ENCODE measurements at regions of chr6 and their contacts with region 1.

Region 1: DNA sequence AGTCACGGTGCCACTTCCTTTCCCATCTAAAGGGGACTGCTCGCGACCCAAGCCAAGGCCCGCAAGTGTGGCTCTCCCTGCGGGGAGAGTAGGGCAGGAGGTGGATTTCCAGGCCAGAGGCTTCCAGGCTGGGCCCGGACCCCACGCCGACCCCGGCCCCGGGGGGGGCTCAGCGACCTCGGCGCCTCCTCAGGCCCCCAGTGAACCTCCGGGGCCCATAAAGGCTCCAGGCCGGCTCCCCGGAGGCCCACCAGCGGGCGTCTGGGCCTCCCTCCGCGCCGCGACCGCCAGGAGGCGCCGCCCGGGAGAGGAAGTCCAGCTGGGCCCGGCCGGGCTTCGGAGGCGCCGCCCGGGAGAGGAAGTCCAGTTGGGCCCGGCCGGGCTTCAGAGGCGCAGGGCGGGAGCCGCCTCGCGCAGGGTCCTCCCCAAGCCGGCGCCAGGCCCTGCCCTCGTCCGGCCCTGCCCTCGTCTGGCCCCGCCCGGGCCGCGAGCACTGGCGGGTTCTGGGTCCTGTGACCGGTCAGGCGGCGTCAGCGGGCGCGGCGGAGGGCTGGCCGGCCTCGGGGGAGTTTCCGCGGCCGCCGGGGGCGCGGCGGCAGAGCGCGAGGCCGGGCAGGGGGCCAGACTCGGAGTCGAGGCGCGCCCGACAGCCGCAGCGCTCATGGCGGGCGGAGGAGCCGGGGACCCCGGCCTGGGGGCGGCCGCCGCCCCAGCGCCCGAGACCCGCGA is at the start of gene RAB32:
- DNase-seq: peak; percentile 95 to 97 (median 96)
- ATAC-seq: peak; percentile 97 to 100 (median 99)
- H3K4me3 ChIP-seq: peak within 1 kb of the TSS; percentile 63 to 88 (median 80)
- H3K27ac ChIP-seq: peak within 1 kb of the TSS; percentile 86 to 98 (median 94)
- H3K4me1 ChIP-seq: peaks cover 0 to 39% (median 19%) of the 10 kb centered on the region in 12 donors
- H3K27me3 ChIP-seq: no peaks in the 10 kb centered on the region
- CTCF ChIP-seq: peak; percentile 65 to 95 (median 80)
- POLR2A ChIP-seq: peak in 1 of 2 donors; percentile 74
- total RNA-seq, gene RAB32: 3.9 to 22.7 (median 7.7) TPM

Region 2: DNA sequence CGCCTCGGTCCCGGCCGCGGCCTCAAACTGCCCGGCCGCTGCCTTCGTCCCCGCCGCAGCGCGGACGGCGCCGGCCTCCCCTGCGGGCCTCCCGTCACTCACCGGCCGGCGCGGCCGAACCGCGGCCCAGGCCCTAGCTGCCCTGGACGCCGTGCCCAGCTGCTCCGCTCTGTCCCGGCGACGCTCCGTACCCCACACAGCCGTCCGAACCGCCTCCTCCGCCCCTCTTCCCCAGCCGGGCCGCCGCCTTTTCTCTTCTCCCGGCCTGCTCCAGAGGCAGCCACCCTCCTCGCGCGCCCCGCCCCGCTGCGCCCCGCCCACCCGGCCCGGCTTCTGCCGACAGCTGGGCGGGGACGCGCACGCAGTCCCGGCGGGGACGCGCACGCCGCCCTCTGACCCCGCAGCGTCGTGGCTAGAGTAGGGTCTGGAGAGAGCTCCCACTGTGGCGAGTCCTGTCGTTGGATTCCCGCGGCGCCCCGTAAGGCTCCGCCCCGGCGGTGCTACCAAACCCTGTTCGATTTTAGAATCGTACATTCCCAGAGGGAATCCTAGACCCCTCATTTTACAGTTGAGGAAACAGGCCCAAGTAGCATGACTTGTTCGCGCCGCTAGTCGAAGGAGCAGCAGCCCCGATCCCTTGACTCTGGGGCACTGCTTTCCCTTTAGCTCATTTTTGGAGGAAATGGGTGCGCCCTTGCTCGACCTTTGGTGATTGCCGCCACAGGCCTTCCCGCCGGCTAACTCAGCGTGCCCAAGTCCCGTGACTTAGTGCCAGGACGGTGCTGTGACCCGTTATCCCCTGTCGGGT is 728.7 kb before region 1 on chr6 and contains the start of gene FBXO30:
- intact Hi-C with region 1: loop called in 1 of 10 experiments (anchors 10 kb)
- DNase-seq: peak; percentile 88 to 94 (median 90)
- ATAC-seq: peak; percentile 91 to 98 (median 97)
- H3K4me3 ChIP-seq: peak within 1 kb of the TSS; percentile 50 to 82 (median 72)
- H3K27ac ChIP-seq: peak within 1 kb of the TSS; percentile 87 to 97 (median 94)
- H3K4me1 ChIP-seq: peaks cover 0 to 58% (median 40%) of the 10 kb centered on the region in 12 donors
- H3K27me3 ChIP-seq: no peaks in the 10 kb centered on the region
- CTCF ChIP-seq: peak in 3 of 12 donors; percentile 7 to 26 (median 9)
- POLR2A ChIP-seq: peak; percentile 26 to 91
- total RNA-seq, gene FBXO30: 9.0 to 17.1 (median 14.4) TPM

Region 3: DNA sequence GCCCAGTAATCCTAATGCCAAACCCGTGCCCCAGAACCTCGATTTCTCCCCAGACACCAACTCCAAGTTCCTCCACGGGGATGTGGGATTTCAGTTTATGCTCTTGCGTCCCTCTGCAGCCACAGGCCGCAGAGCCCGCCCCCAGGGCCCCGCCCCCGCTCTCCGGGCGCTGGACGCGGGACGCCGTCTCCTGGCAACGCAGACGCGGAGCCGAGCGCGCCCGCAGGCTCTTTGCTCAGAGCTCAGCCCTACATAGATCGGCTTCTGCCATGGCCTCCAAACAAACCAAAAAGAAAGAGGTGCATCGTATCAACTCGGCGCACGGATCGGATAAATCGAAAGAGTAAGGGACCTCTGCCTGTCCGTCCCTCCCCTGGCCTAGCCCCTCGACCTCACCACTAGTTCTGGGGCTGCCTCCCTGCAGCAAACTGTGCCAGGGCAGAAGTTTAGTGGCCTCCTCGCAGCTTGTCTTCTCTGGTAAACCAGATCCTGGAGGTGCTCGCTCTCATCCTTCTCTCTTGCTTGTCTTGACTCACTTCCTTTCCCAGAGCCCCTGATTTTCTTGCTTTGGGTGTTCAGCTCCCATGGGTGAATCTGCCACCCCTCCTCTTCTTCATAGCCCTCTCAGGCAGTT is 55.5 kb after region 1 on chr6 and contains the start of gene ADGB:
- intact Hi-C with region 1: loop called in 1 of 10 experiments (anchors 2 kb)
- DNase-seq: peak; percentile 57 to 89 (median 70)
- ATAC-seq: peak; percentile 51 to 96 (median 91)
- H3K4me3 ChIP-seq: peak within 1 kb of the TSS in 11 of 12 donors; percentile 10 to 55 (median 46)
- H3K27ac ChIP-seq: no peak within 1 kb of the TSS
- H3K4me1 ChIP-seq: peaks cover 0 to 34% (median 2%) of the 10 kb centered on the region in 12 donors
- H3K27me3 ChIP-seq: peaks cover 0 to 4% (median 0%) of the 10 kb centered on the region in 9 donors
- CTCF ChIP-seq: no peak
- POLR2A ChIP-seq: no peak
- total RNA-seq, gene ADGB: not detected

Region 4: DNA sequence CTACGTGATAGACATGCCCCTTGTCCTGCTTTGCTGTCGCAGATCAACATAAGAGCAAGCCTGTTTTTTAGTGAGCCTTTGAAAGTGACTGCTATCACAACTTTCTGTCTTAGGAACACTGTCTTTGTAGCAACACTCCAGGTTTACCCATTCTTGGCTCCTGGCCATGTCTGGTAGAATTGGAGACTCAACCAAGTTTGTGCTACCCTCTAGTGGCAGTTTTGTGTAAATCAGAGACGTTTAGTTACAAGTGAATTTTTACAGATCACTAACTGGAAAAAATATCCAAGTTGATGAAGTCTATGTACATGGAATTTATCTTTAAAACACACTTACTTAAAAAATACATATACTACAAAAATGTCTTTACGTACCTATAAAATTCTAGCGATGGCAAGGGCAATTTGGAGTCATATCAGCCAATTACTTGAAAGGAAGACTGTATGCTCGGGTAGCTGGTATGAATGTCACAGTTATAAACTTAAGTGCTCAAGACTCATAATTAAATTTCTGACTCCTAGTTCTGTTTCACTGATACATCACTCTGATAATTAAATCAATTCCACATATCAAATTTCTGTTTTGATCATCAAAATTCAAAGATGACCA is 156.8 kb after region 1 on chr6:
- intact Hi-C with region 1: loop called in 9 of 10 experiments (anchors 2 to 10 kb)
- DNase-seq: peak in 4 of 5 donors; percentile 66 to 80 (median 74)
- ATAC-seq: peak in 3 of 4 donors; percentile 65 to 69 (median 66)
- H3K4me3 ChIP-seq: no peak overlapping the region
- H3K27ac ChIP-seq: no peak overlapping the region
- H3K4me1 ChIP-seq: peaks cover 0 to 3% (median 0%) of the 10 kb centered on the region in 12 donors
- H3K27me3 ChIP-seq: no peaks in the 10 kb centered on the region
- CTCF ChIP-seq: peak; percentile 59 to 86 (median 76)
- POLR2A ChIP-seq: no peak